ENCODE measurements at regions of chr4 and their contacts with region 1.

Region 1: DNA sequence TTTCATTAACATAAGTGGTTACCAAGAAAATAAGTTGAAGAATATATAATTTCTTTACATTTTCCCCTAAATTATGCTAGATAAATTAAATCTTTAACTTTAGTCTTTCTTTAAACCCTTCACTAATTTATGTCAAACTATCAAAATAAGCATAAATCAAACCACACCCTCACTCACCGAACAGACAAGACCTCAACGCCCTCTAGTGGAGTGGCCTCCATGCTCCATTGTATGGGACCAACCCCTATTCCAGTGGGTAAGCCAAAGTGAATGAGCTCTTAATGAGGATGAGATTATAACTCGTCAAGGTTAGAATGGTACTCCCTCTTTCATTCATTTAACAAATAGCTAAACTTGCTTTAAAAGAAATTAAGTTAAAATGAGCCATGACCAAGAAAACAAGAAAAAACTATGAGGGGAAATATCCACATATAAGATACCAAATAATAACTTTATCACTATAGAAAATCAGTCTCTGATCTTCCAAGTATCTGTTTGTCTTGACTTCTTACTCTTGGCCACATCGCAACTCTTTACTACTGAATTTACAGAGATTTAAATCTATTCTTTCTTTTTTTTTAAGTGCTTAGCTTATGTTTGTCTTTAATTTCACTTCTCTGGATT is 15.6 kb upstream of the BBS12 start:
- DNase-seq: peak; percentile 33 to 76 (median 49)
- H3K4me3 ChIP-seq: no peak overlapping the region
- H3K4me3 Mint-ChIP-seq: no peak overlapping the region
- H3K27ac ChIP-seq: no peak overlapping the region
- H3K27ac Mint-ChIP-seq: no peak overlapping the region
- H3K4me1 ChIP-seq: no peaks in the 10 kb centered on the region
- H3K4me1 Mint-ChIP-seq: peaks cover 2 to 12% (median 7%) of the 10 kb centered on the region in 3 donors
- H3K27me3 ChIP-seq: no peaks in the 10 kb centered on the region
- H3K27me3 Mint-ChIP-seq: peaks cover 10% of the 10 kb centered on the region in 2 donors

Region 2: GRCh38 chr4:122732329-122733026 is 15.5 kb after region 1 on chr4 and contains the start of gene BBS12:
- CTCF ChIA-PET with region 1: interaction called, 20 read pairs
- POLR2A ChIA-PET with region 1: no interaction called
- DNase-seq: peak; percentile 96 to 99 (median 99)
- H3K4me3 ChIP-seq: peak within 1 kb of the TSS; percentile 94
- H3K4me3 Mint-ChIP-seq: peak within 1 kb of the TSS; percentile 91 to 99 (median 98)
- H3K27ac ChIP-seq: peak within 1 kb of the TSS; percentile 94
- H3K27ac Mint-ChIP-seq: peak within 1 kb of the TSS; percentile 93 to 100 (median 99)
- H3K4me1 ChIP-seq: peaks cover 8% of the 10 kb centered on the region
- H3K4me1 Mint-ChIP-seq: peaks cover 18 to 35% (median 32%) of the 10 kb centered on the region in 3 donors
- H3K27me3 ChIP-seq: no peaks in the 10 kb centered on the region
- H3K27me3 Mint-ChIP-seq: no peaks in the 10 kb centered on the region
- total RNA-seq, gene BBS12: 1.7 to 2.1 TPM